ENCODE measurements at regions of chr6 and their contacts with region 1.

Region 1: DNA sequence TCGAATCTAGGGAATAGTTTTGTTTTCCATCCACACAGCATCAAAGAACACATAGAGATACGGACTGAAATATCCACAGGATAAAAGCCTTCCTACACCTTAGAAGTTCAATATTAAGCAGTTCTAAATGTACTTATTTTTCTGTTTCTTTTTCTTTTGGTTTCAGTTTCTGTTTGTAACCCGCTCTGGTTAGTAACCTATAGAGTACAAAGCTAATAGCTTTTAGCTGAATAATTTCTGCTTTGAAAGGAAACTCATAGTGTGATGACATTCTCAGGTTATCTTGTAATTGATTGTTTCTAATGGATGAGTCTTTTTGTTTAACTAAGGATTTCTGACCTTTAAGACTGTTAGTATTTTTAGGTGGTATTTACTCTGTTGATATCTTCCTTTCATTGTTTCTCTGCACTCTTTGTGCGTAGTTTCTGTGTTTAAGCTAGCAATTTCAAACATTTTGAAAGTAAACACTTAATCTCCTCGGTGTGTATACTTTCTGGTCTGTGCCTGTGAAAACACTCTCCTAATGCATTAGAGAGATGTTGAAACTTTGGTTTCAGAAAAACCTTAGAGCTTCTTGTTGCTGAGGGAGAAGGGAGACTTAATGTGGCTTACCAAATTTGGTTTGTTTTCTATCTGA is 385.5 kb downstream of the HDGFL1 start:
- DNase-seq: peak; percentile 68
- H3K4me3 ChIP-seq: peak overlapping the region; percentile 10 to 57 (median 39)
- H3K27ac ChIP-seq: peak overlapping the region; percentile 53
- H3K4me1 ChIP-seq: peaks cover 3% of the 10 kb centered on the region
- H3K27me3 ChIP-seq: no peaks in the 10 kb centered on the region
- CTCF ChIP-seq: no peak
- POLR2A ChIP-seq: no peak

Region 2: GRCh38 chr6:22966691-22967422 is 12.0 kb after region 1 on chr6:
- CTCF ChIA-PET with region 1: interaction called, 10 read pairs
- POLR2A ChIA-PET with region 1: no interaction called
- dilution Hi-C with region 1: no loop called
- intact Hi-C with region 1: no loop called
- DNase-seq: no peak
- H3K4me3 ChIP-seq: no peak overlapping the region
- H3K27ac ChIP-seq: no peak overlapping the region
- H3K4me1 ChIP-seq: no peaks in the 10 kb centered on the region
- H3K27me3 ChIP-seq: no peaks in the 10 kb centered on the region
- CTCF ChIP-seq: no peak
- POLR2A ChIP-seq: no peak

Region 3: DNA sequence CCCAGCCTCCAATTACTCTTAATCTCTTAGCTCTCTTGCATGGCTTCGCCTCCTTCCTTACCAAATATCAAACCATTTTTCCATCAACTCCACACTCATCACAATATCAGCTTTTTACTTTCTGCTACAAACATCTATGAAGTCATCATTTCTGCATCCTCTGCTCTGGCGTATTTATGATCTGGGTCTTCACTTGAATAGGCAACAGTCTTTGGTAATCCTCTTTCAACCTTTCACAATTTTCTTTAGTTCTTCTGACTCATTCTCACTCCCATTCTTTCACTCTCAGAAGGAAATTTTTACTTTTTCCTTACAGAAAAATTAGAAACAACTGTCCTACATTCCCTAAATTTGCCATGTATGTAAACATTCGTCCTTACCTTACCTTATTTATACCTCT is 136.9 kb after region 1 on chr6:
- CTCF ChIA-PET with region 1: no interaction called
- POLR2A ChIA-PET with region 1: no interaction called
- dilution Hi-C with region 1: no loop called
- intact Hi-C with region 1: no loop called
- DNase-seq: no peak
- H3K4me3 ChIP-seq: no peak overlapping the region
- H3K27ac ChIP-seq: no peak overlapping the region
- H3K4me1 ChIP-seq: no peaks in the 10 kb centered on the region
- H3K27me3 ChIP-seq: no peaks in the 10 kb centered on the region
- CTCF ChIP-seq: no peak
- POLR2A ChIP-seq: no peak